ENCODE measurements at regions of chr10 and their contacts with region 1.

Region 1: DNA sequence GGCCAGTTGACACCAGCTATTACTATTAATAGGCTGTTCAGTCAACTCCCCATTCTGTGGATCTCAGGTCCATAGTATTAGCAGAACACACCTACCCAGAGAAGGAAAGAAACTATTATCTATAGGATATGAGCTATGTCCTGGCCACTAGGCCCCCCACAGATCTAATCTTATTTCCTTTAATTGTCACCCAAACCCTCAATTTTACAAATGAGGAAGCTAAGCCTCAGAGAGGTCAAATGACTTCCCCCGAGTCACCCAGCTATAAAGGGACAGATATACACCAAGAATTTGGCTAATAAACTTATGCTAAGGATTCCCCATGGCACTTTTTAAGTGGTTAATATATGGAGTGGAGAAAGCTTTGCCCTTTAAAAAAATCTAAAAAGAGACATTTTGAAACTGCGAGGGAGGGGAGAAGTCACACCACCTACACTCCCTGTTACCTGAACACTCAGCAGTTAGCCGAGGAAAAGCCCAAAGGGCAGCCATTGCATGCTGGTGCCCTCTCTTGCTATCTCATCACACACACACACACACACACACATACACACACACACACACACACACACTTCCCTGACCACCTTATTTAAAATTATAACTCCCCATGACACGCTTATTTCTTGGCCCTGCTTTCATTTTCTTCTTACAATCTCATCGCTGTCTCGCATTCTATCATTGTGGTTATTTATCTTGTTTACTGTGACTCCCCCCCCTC is 157.0 kb upstream of the ADO start:
- DNase-seq: no peak
- ATAC-seq: no peak
- H3K4me3 ChIP-seq: no peak overlapping the region
- H3K27ac ChIP-seq: no peak overlapping the region
- H3K4me1 ChIP-seq: peaks cover 20% of the 10 kb centered on the region
- H3K27me3 ChIP-seq: no peaks in the 10 kb centered on the region
- CTCF ChIP-seq: no peak

Region 2: DNA sequence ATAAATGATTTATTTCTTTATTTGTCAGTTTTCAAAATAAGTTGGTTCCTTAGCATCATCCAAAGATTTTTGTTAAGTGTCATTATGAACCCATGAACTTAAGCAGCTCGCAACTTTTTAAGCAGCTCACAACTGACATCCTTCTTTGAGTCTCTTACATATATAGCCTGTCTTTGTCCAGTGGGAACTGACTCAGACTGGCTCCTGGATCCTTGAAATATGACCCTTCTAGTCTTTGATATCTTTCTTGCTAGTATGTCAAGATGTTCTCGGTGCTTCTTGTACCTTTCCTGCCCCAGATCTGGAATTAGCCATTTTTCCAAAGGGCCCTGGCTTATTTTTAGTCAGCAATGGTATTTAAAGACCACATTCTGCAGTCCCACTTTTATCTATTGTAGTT is 799.9 kb before region 1 on chr10:
- CTCF ChIA-PET with region 1: no interaction called
- POLR2A ChIA-PET with region 1: no interaction called
- intact Hi-C with region 1: no loop called
- DNase-seq: peak; percentile 64
- ATAC-seq: peak; percentile 37; the same call in 1 of the 2 replicates
- H3K4me3 ChIP-seq: no peak overlapping the region
- H3K27ac ChIP-seq: no peak overlapping the region
- H3K4me1 ChIP-seq: peaks cover 32% of the 10 kb centered on the region
- H3K27me3 ChIP-seq: no peaks in the 10 kb centered on the region
- CTCF ChIP-seq: no peak

Region 3: DNA sequence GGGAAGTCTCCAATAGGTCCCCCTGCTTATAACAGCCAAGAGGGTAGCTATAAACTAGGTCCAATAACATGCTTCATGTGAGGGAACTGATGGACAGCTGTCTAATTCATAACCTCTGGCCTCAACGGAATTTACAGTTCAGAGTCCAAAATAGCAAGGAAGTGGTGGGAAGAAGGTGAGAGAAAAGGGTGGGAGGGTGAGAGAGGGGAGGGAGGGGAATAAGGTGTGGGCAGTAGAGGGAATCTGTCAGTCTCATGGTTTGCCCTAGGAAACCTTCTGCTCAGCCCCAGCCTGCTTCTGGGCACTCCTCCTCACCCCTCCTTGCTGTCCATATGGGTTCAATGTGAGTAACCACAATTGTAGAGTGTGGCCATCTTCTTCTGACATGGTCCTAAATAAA is 23.6 kb after region 1 on chr10:
- CTCF ChIA-PET with region 1: interaction called, 12 read pairs
- POLR2A ChIA-PET with region 1: no interaction called
- intact Hi-C with region 1: no loop called
- DNase-seq: no peak
- ATAC-seq: no peak
- H3K4me3 ChIP-seq: no peak overlapping the region
- H3K27ac ChIP-seq: no peak overlapping the region
- H3K4me1 ChIP-seq: no peaks in the 10 kb centered on the region
- H3K27me3 ChIP-seq: no peaks in the 10 kb centered on the region
- CTCF ChIP-seq: no peak

Region 4: GRCh38 chr10:62707810-62708209 is 60.3 kb after region 1 on chr10:
- CTCF ChIA-PET with region 1: no interaction called
- POLR2A ChIA-PET with region 1: no interaction called
- intact Hi-C with region 1: no loop called
- DNase-seq: no peak
- ATAC-seq: no peak
- H3K4me3 ChIP-seq: no peak overlapping the region
- H3K27ac ChIP-seq: no peak overlapping the region
- H3K4me1 ChIP-seq: no peaks in the 10 kb centered on the region
- H3K27me3 ChIP-seq: no peaks in the 10 kb centered on the region
- CTCF ChIP-seq: no peak

Measured in PC-3 (cell line).